CD8-positive, alpha-beta T cell (primary cell): ENCODE measurements at regions of chr20 and their contacts with region 1.

Region 1: DNA sequence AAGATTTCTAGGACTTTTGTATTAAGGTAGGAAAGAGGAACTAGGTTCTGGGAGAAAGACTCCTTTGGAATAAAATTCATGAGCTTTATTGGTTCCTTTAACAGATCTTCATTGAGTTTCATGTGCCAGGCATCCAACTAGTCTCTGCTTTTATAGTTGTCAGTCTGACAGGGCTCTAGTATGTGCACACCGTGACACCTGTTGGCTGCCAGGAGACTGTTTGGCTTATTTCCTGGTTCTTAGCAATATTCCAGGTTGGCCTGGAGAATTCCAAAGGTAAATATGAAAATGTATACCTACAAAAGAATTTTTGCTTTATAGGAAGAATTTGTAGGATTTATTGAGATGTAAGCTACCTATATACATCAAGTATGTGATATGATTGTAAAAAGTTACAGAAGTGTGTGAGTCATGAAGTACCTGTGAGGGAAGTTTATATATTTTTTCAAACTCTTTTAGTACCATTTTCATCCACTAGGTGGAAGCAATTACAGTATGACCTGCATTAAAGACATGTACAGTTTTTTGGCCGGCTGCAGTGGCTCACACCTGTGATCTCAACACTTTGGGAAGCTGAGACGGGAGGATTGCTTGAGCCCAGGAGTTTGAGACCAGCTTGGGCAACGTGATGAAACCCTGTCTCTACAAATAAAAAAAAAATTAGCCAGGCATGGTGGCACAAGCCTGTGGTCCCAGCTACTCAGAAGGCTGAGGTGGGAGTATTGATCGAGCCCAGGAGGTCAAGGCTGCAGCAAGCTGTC is 35.2 kb downstream of the NDUFAF5 start:
- DNase-seq: peak in 3 of 9 experiments; percentile 6 to 55 (median 42)
- ATAC-seq: peak; percentile 69
- H3K4me3 ChIP-seq: no peak overlapping the region
- H3K4me3 Mint-ChIP-seq: no peak overlapping the region
- H3K27ac ChIP-seq: no peak overlapping the region
- H3K27ac Mint-ChIP-seq: no peak overlapping the region
- H3K4me1 ChIP-seq: no peaks in the 10 kb centered on the region
- H3K4me1 Mint-ChIP-seq: peaks cover 2% of the 10 kb centered on the region
- H3K27me3 ChIP-seq: no peaks in the 10 kb centered on the region
- H3K27me3 Mint-ChIP-seq: no peaks in the 10 kb centered on the region
- CTCF ChIP-seq: peak; percentile 80

Region 2: DNA sequence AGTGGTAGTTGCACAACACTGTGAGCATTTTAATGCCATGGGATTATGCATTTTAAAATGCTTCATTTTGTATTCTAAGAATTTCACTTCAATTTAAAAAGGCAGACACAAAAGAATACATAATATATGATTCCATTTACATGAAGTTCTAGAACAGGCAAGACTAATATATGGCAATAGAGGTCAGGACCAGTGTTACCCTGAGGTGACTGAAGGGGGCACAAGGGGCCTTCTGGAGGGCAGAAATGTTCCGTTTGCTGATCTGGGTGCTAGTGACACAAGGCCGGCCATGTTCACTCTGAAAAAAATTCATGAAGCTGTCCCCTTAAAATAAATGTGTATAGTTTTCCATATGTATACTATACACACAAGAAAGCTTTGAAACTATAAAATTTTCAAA is 209.9 kb before region 1 on chr20:
- CTCF ChIA-PET with region 1: no interaction called
- POLR2A ChIA-PET with region 1: no interaction called
- intact Hi-C with region 1: no loop called
- DNase-seq: peak in 2 of 9 experiments; percentile 8 to 28
- ATAC-seq: no peak
- H3K4me3 ChIP-seq: no peak overlapping the region
- H3K4me3 Mint-ChIP-seq: no peak overlapping the region
- H3K27ac ChIP-seq: no peak overlapping the region
- H3K27ac Mint-ChIP-seq: no peak overlapping the region
- H3K4me1 ChIP-seq: no peaks in the 10 kb centered on the region
- H3K4me1 Mint-ChIP-seq: peaks cover 2% of the 10 kb centered on the region
- H3K27me3 ChIP-seq: no peaks in the 10 kb centered on the region
- H3K27me3 Mint-ChIP-seq: no peaks in the 10 kb centered on the region
- CTCF ChIP-seq: peak; percentile 10

Region 3: DNA sequence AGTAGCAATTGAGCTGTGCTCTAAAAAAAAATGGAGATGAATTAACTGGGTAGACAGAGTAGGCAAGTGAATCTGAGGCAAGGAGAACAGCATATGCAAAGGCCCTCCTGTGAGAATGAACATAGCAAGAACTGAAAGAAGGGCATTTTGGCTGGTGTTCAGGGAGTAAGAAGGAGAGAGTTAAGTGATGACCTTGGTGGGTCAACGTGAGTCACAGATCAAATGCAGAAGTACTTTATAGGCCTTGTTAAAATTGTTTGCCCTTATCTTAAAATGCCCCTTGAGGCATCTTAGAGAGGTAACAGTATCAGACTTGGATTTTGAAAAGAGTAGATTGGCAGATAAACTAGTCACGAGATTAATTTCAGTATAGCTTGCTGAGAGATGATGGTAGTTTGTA is 10.7 kb before region 1 on chr20:
- CTCF ChIA-PET with region 1: interaction called, 14 read pairs
- POLR2A ChIA-PET with region 1: no interaction called
- intact Hi-C with region 1: no loop called
- DNase-seq: no peak
- ATAC-seq: no peak
- H3K4me3 ChIP-seq: no peak overlapping the region
- H3K4me3 Mint-ChIP-seq: no peak overlapping the region
- H3K27ac ChIP-seq: no peak overlapping the region
- H3K27ac Mint-ChIP-seq: no peak overlapping the region
- H3K4me1 ChIP-seq: no peaks in the 10 kb centered on the region
- H3K4me1 Mint-ChIP-seq: no peaks in the 10 kb centered on the region
- H3K27me3 ChIP-seq: no peaks in the 10 kb centered on the region
- H3K27me3 Mint-ChIP-seq: no peaks in the 10 kb centered on the region
- CTCF ChIP-seq: no peak

Region 4: GRCh38 chr20:14055127-14055742 is 235.2 kb after region 1 on chr20:
- CTCF ChIA-PET with region 1: no interaction called
- POLR2A ChIA-PET with region 1: no interaction called
- intact Hi-C with region 1: loop called in 1 of 2 experiments (anchors 5 kb)
- DNase-seq: peak in 2 of 9 experiments; percentile 22 to 38
- ATAC-seq: no peak
- H3K4me3 ChIP-seq: no peak overlapping the region
- H3K4me3 Mint-ChIP-seq: no peak overlapping the region
- H3K27ac ChIP-seq: no peak overlapping the region
- H3K27ac Mint-ChIP-seq: no peak overlapping the region
- H3K4me1 ChIP-seq: no peaks in the 10 kb centered on the region
- H3K4me1 Mint-ChIP-seq: no peaks in the 10 kb centered on the region
- H3K27me3 ChIP-seq: no peaks in the 10 kb centered on the region
- H3K27me3 Mint-ChIP-seq: no peaks in the 10 kb centered on the region
- CTCF ChIP-seq: peak; percentile 28